CD8-positive, alpha-beta T cell (primary cell): ENCODE measurements at regions of chr7 and their contacts with region 1.

Region 1: GRCh38 chr7:97479740-97480290 is 252.1 kb upstream of the TAC1 start:
- DNase-seq: no peak
- ATAC-seq: no peak
- H3K4me3 ChIP-seq: no peak overlapping the region
- H3K4me3 Mint-ChIP-seq: no peak overlapping the region
- H3K27ac ChIP-seq: no peak overlapping the region
- H3K27ac Mint-ChIP-seq: no peak overlapping the region
- H3K4me1 ChIP-seq: no peaks in the 10 kb centered on the region
- H3K4me1 Mint-ChIP-seq: no peaks in the 10 kb centered on the region
- H3K27me3 ChIP-seq: no peaks in the 10 kb centered on the region
- H3K27me3 Mint-ChIP-seq: no peaks in the 10 kb centered on the region
- CTCF ChIP-seq: no peak

Region 2: DNA sequence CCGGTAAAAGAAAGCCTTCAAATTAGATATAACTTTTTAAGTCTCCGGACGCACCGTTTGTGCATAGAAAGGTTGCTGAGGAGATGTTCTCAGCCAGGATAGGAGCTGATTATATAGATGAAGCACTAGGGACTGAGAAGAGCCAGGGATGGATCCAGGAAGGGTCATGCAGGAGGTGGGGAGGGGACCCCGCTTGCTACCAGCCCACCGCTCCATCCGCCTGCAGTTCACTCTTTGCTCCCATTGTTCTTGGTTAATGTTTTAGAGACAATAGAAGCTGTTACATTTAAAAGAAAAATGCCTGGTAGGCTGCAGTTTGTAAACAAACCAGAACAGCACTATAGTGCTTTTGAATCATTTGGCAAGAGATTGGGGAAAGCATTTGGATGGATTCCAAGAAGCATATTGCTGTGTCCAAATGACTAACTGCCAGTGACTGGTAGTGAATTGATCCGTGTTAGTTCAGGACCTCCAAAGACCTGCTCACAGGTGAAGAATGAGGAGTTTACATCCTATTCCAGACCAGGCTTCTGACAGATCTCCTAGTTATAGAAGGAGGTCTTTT is 76.1 kb after region 1 on chr7:
- CTCF ChIA-PET with region 1: no interaction called
- POLR2A ChIA-PET with region 1: no interaction called
- intact Hi-C with region 1: loop called in 1 of 2 experiments (anchors 2 kb)
- DNase-seq: no peak
- ATAC-seq: no peak
- H3K4me3 ChIP-seq: no peak overlapping the region
- H3K4me3 Mint-ChIP-seq: no peak overlapping the region
- H3K27ac ChIP-seq: no peak overlapping the region
- H3K27ac Mint-ChIP-seq: no peak overlapping the region
- H3K4me1 ChIP-seq: no peaks in the 10 kb centered on the region
- H3K4me1 Mint-ChIP-seq: no peaks in the 10 kb centered on the region
- H3K27me3 ChIP-seq: no peaks in the 10 kb centered on the region
- H3K27me3 Mint-ChIP-seq: no peaks in the 10 kb centered on the region
- CTCF ChIP-seq: no peak

Region 3: DNA sequence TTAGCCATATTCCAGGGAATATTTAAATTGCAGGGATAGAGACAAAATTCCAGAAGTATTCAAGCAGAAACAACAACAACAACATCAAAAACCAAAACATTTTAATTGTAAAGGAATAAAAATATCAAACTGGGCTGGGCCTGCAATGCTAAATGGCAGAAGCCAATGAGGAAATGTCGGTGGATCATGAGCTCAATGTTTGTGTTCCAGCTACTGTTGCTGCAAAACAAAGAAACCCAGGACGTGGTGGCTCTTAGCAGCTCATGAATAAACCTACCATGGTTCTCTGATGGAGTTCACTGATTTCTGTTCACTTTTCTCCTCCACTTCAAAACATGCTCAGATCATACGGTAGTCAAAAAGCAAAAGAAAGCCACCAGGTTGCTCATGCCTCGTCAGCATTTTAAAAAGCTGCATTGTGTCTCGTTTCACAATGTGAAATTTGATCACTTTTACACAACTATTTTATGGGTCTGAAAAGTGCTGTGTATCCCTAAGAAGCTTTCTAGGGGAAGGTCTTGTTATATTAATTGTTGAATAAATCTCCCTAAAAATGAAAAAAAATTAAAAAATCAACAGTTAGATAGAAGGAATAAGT is 338.4 kb after region 1 on chr7:
- CTCF ChIA-PET with region 1: no interaction called
- POLR2A ChIA-PET with region 1: no interaction called
- intact Hi-C with region 1: no loop called
- DNase-seq: no peak
- ATAC-seq: no peak
- H3K4me3 ChIP-seq: no peak overlapping the region
- H3K4me3 Mint-ChIP-seq: no peak overlapping the region
- H3K27ac ChIP-seq: no peak overlapping the region
- H3K27ac Mint-ChIP-seq: no peak overlapping the region
- H3K4me1 ChIP-seq: no peaks in the 10 kb centered on the region
- H3K4me1 Mint-ChIP-seq: no peaks in the 10 kb centered on the region
- H3K27me3 ChIP-seq: no peaks in the 10 kb centered on the region
- H3K27me3 Mint-ChIP-seq: no peaks in the 10 kb centered on the region
- CTCF ChIP-seq: no peak